ENCODE measurements at regions of chr16 and their contacts with region 1.

Region 1: GRCh38 chr16:35585411-35585810 is 2126.0 kb downstream of the TP53TG3F start:
- DNase-seq: no peak
- ATAC-seq: no peak
- H3K4me3 ChIP-seq: no peak overlapping the region
- H3K27ac ChIP-seq: no peak overlapping the region
- H3K4me1 ChIP-seq: no peaks in the 10 kb centered on the region
- H3K27me3 ChIP-seq: no peaks in the 10 kb centered on the region
- CTCF ChIP-seq: no peak
- POLR2A ChIP-seq: no peak

Region 2: DNA sequence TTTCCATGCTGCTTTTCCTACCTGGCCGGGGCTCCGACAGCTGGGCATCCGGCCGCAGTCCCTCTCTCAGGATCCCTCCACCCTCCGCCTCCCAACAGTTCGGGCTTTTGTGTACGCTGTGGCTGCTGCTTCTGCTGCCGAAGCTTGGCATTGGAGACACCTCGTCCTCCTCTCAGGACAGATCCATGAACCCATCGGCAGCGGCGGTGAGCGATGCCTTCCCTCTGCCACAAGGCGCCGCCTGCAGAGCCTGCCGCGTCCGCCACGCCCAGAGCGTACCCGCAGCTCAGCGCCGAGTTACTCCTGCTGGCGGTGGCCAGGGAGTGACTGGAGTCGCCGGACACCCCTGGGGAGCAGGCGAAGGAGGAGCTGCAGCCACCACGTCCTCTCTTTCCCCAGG is 93.2 kb before region 1 on chr16:
- intact Hi-C with region 1: no loop called
- DNase-seq: no peak
- ATAC-seq: no peak
- H3K4me3 ChIP-seq: no peak overlapping the region
- H3K27ac ChIP-seq: no peak overlapping the region
- H3K4me1 ChIP-seq: no peaks in the 10 kb centered on the region
- H3K27me3 ChIP-seq: peaks cover 0 to 5% (median 0%) of the 10 kb centered on the region in 9 donors
- CTCF ChIP-seq: no peak
- POLR2A ChIP-seq: no peak

Region 3: DNA sequence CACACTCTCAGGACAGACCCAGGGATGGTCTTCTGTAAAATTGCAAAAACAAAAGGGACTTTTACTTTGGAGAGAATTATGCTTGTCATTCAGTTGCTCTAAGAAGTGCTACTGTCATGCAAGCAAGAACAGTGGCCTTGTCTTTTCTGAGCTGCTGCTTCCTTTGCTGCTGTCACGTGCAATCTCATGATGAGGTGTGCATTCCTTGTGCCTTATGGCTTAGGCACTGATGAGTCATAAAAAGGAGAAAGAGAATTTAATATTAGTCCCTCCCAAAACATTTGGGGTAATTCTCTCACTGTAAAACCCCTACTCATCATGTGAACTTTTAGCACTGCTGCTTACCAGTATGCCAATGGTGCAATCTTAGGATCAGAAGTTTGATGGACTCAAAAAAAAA is 74.7 kb before region 1 on chr16:
- intact Hi-C with region 1: no loop called
- DNase-seq: no peak
- ATAC-seq: no peak
- H3K4me3 ChIP-seq: no peak overlapping the region
- H3K27ac ChIP-seq: no peak overlapping the region
- H3K4me1 ChIP-seq: no peaks in the 10 kb centered on the region
- H3K27me3 ChIP-seq: peaks cover 0 to 16% (median under 1%) of the 10 kb centered on the region in 9 donors
- CTCF ChIP-seq: no peak
- POLR2A ChIP-seq: no peak

Region 4: GRCh38 chr16:35525734-35526594 is 59.4 kb before region 1 on chr16:
- intact Hi-C with region 1: loop called in 1 of 10 experiments (anchors 10 kb)
- DNase-seq: no peak
- ATAC-seq: no peak
- H3K4me3 ChIP-seq: no peak overlapping the region
- H3K27ac ChIP-seq: no peak overlapping the region
- H3K4me1 ChIP-seq: no peaks in the 10 kb centered on the region
- H3K27me3 ChIP-seq: peaks cover 0 to 4% (median 0%) of the 10 kb centered on the region in 9 donors
- CTCF ChIP-seq: no peak
- POLR2A ChIP-seq: no peak